Colonic mucosa (tissue), 4 donors: ENCODE measurements at regions of chr15 and their contacts with region 1.

Region 1: DNA sequence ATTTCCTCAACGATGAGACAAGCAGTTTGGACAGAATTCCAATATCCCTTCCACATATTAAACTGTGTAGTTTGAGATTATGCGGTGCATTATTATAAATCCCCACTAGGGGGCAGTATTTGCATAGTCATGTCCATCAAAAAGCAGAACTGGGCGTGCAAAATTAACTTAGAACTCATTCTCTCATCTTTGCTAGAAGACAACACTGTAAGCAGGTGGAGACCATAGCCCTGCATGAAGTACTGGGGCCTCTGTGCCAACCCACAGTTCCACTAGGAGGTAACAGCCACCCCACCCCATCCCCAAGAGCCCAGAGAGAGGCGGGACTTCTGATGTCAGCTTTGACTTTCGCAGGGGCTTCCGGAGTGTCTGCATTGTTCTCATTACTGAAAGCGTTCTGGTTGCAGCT is 106.6 kb upstream of the TMC3 start:
- DNase-seq: peak; percentile 50
- H3K4me3 ChIP-seq: no peak overlapping the region
- H3K27ac ChIP-seq: no peak overlapping the region
- H3K4me1 ChIP-seq: no peaks in the 10 kb centered on the region
- H3K27me3 ChIP-seq: no peaks in the 10 kb centered on the region
- CTCF ChIP-seq: peak; percentile 83

Region 2: DNA sequence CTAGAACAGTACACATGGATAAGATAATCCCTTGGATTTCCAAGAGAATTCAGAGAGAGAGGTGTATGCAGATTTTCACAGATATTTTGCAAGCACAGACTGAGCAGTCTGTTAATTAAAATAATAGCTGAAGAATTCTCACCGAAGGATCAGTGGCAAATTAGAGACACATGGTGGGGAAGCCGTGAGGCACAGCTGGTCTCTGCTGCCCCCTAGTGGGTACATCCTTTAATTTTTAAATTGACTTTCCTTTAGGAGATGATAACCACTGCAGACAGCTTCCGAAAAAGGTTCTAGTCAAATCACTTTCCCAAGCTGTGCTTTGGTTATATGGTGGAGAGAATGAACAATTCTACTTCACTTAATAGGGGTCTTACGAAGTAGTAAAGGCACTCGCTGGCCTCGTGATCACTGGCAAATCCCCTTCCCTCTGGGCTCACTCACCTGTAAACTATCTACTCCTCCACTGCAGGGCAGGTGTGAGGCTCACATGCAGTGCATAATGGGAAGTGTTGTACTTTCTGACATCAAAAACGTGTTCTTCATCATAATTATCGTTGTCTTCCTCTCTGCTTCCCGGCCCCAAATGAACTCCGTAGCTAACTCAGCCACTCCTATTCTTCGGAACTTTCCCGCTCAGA is 510.5 kb before region 1 on chr15:
- intact Hi-C with region 1: no loop called
- DNase-seq: peak; percentile 73
- H3K4me3 ChIP-seq: no peak overlapping the region
- H3K27ac ChIP-seq: no peak overlapping the region
- H3K4me1 ChIP-seq: no peaks in the 10 kb centered on the region
- H3K27me3 ChIP-seq: no peaks in the 10 kb centered on the region
- CTCF ChIP-seq: peak; percentile 81

Region 3: DNA sequence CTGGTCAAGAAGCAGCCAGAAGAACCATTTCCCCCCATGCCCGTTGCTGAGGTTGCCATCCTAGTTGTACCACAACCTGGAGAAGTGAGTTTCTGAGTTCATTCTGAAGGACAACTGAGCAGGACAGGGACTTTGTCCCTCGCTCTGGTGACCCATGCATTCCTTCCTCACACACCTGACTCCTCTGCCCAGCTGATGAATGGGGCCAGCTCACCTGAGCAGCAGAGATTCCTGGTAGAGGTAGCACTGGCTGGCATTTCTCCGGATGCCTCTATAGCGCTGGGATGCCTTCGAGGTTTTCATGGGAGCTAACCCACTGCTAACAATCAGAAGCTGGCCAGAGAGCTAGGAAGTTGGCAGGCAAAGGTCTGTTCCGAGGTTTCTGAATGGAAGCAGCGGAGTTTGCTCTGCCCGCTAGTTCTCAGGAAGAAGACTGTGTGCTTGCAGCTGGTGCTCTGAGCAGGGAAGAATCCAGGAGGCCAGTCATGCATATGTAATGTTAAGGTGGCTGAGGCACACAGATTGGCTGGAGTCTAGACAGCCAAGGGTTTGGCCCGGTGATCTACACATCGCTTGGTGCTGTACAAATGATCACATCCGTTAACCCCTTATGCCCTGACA is 106.8 kb before region 1 on chr15 and contains the start of gene TMC3:
- intact Hi-C with region 1: no loop called
- DNase-seq: no peak
- H3K4me3 ChIP-seq: no peak within 1 kb of the TSS
- H3K27ac ChIP-seq: no peak within 1 kb of the TSS
- H3K4me1 ChIP-seq: no peaks in the 10 kb centered on the region
- H3K27me3 ChIP-seq: no peaks in the 10 kb centered on the region
- CTCF ChIP-seq: no peak
- total RNA-seq, gene TMC3: 0.08 TPM in 1 of 2 donors, not detected in the other

Region 4: GRCh38 chr15:81939604-81940440 is 459.2 kb after region 1 on chr15:
- intact Hi-C with region 1: loop called (anchors 5 kb)
- DNase-seq: no peak
- H3K4me3 ChIP-seq: no peak overlapping the region
- H3K27ac ChIP-seq: no peak overlapping the region
- H3K4me1 ChIP-seq: no peaks in the 10 kb centered on the region
- H3K27me3 ChIP-seq: no peaks in the 10 kb centered on the region
- CTCF ChIP-seq: peak; percentile 74

Region 5: GRCh38 chr15:82046666-82047452 is 566.2 kb after region 1 on chr15:
- intact Hi-C with region 1: loop called (anchors 10 kb)
- DNase-seq: peak; percentile 91
- H3K4me3 ChIP-seq: peak overlapping the region; percentile 84
- H3K27ac ChIP-seq: peak overlapping the region; percentile 87
- H3K4me1 ChIP-seq: peaks cover 7% of the 10 kb centered on the region
- H3K27me3 ChIP-seq: peaks cover 26% of the 10 kb centered on the region
- CTCF ChIP-seq: peak; percentile 56